Aorta (tissue), 5 donors: ENCODE measurements at regions of chr3 and their contacts with region 1.

Region 1: DNA sequence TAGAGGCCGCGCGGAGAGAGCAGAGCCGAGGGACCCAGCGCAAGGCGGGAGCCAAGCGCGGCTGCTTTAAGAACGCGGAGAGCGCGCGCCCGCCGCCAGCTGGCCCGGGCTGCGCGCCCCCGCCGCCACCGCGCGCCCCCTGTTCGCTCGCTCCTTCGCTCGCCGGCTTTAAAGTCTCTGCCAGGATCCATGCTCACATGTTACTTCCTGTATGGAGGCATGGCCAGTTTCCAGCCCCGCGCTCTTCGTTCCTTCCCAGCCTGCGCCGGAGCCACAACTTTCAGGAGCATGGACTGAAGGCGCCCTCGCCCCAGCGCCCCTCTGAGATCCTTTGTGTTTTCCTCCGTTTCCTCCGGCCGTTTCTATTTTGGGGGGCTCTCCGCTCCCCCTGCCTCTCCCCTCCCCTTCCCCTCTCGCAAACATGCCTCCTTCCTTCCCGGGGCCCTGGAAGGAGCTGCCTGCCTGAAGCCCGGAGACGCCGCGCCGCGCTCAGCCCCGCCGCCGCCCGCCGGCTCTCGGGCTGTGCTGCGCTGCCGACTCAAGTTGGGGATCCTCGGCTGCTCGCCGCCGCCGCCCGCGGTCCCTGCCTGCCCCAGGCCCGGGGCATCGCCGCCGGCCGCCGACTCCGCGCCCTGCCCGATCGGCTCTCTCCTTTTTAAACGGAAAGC is at the start of gene PTPRG:
- DNase-seq: peak; percentile 91 to 95
- ATAC-seq: peak; percentile 88
- H3K4me3 ChIP-seq: peak within 1 kb of the TSS; percentile 97 to 99
- H3K27ac ChIP-seq: peak within 1 kb of the TSS; percentile 78 to 89
- H3K4me1 ChIP-seq: no peaks in the 10 kb centered on the region
- H3K27me3 ChIP-seq: no peaks in the 10 kb centered on the region
- total RNA-seq, gene PTPRG: 85.0 to 150 TPM

Region 2: GRCh38 chr3:61018807-61019206 is 542.7 kb before region 1 on chr3:
- intact Hi-C with region 1: no loop called
- DNase-seq: no peak
- ATAC-seq: no peak
- H3K4me3 ChIP-seq: no peak overlapping the region
- H3K27ac ChIP-seq: no peak overlapping the region
- H3K4me1 ChIP-seq: no peaks in the 10 kb centered on the region
- H3K27me3 ChIP-seq: no peaks in the 10 kb centered on the region

Region 3: DNA sequence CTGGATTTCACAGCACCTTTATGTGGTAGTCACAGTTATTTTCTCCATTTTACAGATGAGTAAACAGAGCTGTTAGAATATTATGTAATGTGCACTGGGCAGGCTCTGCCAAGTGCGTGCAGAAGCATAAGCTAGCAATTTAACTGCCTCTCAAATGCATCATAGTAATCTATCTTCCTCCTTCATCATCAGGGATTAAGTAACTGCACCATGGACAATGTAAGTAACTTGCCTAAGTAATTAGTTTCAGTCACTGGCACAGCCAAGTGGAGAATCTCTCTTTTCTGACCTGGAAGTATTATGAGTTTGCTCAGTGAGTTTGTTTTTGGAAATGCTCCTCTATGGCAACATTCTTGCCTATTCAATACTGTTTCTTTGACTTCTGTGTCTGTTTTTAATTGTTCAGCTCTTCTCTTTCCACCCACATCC is 260.3 kb after region 1 on chr3:
- intact Hi-C with region 1: loop called (anchors 5 to 10 kb)
- DNase-seq: no peak
- ATAC-seq: peak; percentile 23
- H3K4me3 ChIP-seq: no peak overlapping the region
- H3K27ac ChIP-seq: peak overlapping the region; percentile 68 to 74
- H3K4me1 ChIP-seq: peaks cover 2 to 5% of the 10 kb centered on the region in 2 donors
- H3K27me3 ChIP-seq: no peaks in the 10 kb centered on the region

Region 4: GRCh38 chr3:61927332-61927731 is 365.8 kb after region 1 on chr3:
- intact Hi-C with region 1: loop called (anchors 5 kb)
- DNase-seq: peak; percentile 87
- ATAC-seq: peak; percentile 83
- H3K4me3 ChIP-seq: no peak overlapping the region
- H3K27ac ChIP-seq: peak overlapping the region; percentile 33 to 88
- H3K4me1 ChIP-seq: peaks cover 11 to 19% of the 10 kb centered on the region in 2 donors
- H3K27me3 ChIP-seq: no peaks in the 10 kb centered on the region

Region 5: GRCh38 chr3:62159709-62160092 is 598.2 kb after region 1 on chr3:
- intact Hi-C with region 1: loop called in 1 of 2 experiments (anchors 2 kb)
- DNase-seq: peak; percentile 81 to 87
- ATAC-seq: peak; percentile 92
- H3K4me3 ChIP-seq: no peak overlapping the region
- H3K27ac ChIP-seq: peak overlapping the region; percentile 89 to 100
- H3K4me1 ChIP-seq: peaks cover 12 to 20% of the 10 kb centered on the region in 2 donors
- H3K27me3 ChIP-seq: no peaks in the 10 kb centered on the region